ENCODE measurements at regions of chr10 and their contacts with region 1.

Region 1: GRCh38 chr10:30803892-30804322 is 174.4 kb upstream of the LYZL2 start:
- DNase-seq: no peak
- ATAC-seq: no peak
- H3K4me3 ChIP-seq: no peak overlapping the region
- H3K27ac ChIP-seq: no peak overlapping the region
- H3K4me1 ChIP-seq: no peaks in the 10 kb centered on the region
- H3K27me3 ChIP-seq: peaks cover 5 to 13% of the 10 kb centered on the region in 2 experiments; a peak in 3 of 5 replicates
- CTCF ChIP-seq: no peak
- EP300 ChIP-seq: no peak
- POLR2A ChIP-seq: no peak
- RAD21 ChIP-seq: no peak

Region 2: DNA sequence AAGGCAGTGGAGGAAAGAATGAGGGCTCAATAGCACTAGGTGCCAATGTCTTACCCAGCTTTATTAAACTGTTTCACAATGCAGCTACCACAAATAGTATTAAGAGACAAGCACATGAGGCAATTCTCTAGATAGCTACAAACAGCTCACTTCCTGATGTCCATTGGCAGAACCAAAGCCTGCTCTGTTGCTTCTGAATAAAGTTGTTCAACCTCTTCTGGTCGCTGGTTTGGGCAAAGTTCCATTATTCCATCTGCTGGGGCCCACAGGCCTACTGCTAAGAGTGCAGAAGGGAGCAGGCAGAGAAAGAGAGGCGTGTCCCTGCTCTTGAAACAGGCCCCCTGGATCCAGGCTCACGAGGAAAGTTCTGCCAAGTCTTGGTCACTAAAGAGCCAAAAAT is 53.9 kb after region 1 on chr10:
- CTCF ChIA-PET with region 1: no interaction called
- POLR2A ChIA-PET with region 1: no interaction called
- in situ Hi-C with region 1: no loop called
- intact Hi-C with region 1: no loop called
- DNase-seq: no peak
- ATAC-seq: no peak
- H3K4me3 ChIP-seq: no peak overlapping the region
- H3K27ac ChIP-seq: no peak overlapping the region
- H3K4me1 ChIP-seq: no peaks in the 10 kb centered on the region
- H3K27me3 ChIP-seq: no peaks in the 10 kb centered on the region; a peak in 1 of 5 replicates
- CTCF ChIP-seq: no peak
- EP300 ChIP-seq: no peak
- POLR2A ChIP-seq: no peak
- RAD21 ChIP-seq: no peak

Region 3: GRCh38 chr10:31209478-31209877 is 405.6 kb after region 1 on chr10:
- CTCF ChIA-PET with region 1: no interaction called
- POLR2A ChIA-PET with region 1: no interaction called
- in situ Hi-C with region 1: no loop called
- intact Hi-C with region 1: loop called (anchors 5 kb)
- DNase-seq: no peak
- ATAC-seq: no peak
- H3K4me3 ChIP-seq: no peak overlapping the region
- H3K27ac ChIP-seq: no peak overlapping the region
- H3K4me1 ChIP-seq: no peaks in the 10 kb centered on the region
- H3K27me3 ChIP-seq: peaks cover 0 to 22% of the 10 kb centered on the region in 2 experiments; a peak in 2 of 5 replicates
- CTCF ChIP-seq: no peak
- EP300 ChIP-seq: no peak
- POLR2A ChIP-seq: no peak
- RAD21 ChIP-seq: no peak

Measured in HepG2 (cell line).